ENCODE measurements at regions of chr17 and their contacts with region 1.

Region 1: DNA sequence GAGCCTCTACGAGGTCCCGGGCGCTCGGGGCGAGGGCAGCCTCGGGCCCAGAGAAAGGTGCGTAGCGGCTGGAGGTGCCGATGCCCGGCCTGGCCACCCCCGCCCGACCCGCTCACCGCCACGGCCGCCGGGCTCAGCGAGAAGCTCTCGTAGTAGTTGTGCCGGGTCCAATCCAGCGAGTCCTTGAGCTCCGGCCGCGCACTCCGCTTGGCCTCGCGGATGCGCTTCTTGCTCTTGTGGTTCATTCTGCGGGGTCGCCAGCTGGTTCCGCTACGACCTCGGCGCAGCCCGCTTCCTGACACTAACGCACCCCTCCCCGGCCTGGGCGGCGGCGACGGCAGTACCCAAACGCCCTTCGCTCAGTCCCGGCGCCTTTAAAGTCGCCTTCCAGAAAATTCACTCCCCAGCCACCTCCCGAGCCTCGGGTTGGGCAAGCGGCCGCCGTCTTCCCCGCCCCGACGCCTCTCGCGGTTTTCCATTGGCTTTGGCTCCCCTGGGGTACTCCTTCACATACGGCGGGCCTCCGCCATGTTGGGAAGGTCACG is at the start of gene JMJD6:
- DNase-seq: peak; percentile 98
- H3K4me3 Mint-ChIP-seq: peak within 1 kb of the TSS; percentile 96
- H3K27ac Mint-ChIP-seq: peak within 1 kb of the TSS; percentile 93
- H3K4me1 Mint-ChIP-seq: peaks cover 66% of the 10 kb centered on the region
- H3K27me3 Mint-ChIP-seq: no peaks in the 10 kb centered on the region
- total RNA-seq, gene JMJD6: 33.0 to 33.6 TPM

Region 2: GRCh38 chr17:76557368-76558197 is 168.7 kb before region 1 on chr17:
- CTCF ChIA-PET with region 1: interaction called, 4 read pairs
- intact Hi-C with region 1: loop called (anchors 5 kb)
- DNase-seq: peak; percentile 97
- H3K4me3 Mint-ChIP-seq: peak overlapping the region; percentile 96
- H3K27ac Mint-ChIP-seq: peak overlapping the region; percentile 96
- H3K4me1 Mint-ChIP-seq: peaks cover 54% of the 10 kb centered on the region
- H3K27me3 Mint-ChIP-seq: no peaks in the 10 kb centered on the region

Region 3: DNA sequence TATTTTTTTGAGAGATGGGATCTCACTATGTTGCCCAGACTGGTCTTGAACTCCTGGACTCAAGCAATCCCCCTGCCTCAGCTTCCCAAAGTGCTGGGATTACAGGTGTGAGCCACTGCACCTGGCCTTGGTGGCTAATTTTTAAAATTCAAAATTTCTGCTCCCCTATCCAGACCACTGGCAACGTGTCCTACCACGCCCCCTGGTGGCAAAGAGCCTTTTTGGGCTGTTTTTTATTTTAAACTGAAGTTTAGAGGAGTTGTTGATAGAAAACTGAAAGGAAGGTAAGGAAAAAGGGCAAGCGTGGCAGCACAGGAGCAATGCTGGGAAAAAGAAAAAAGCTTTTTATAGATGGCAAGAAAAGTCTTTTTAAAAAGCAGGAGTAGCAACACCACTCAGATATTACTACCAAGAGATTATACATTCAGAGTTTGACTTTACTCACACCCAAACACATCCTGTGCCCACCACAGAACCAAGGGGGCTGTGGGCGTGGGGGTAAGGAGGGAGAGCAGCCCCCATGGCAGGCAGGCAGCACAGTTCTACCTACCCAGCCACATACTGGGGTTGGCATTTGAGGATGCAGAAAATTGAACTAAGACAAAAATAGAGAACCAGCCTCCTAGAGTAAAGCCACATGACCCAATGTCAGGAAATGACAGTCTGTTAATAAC is 11.3 kb before region 1 on chr17:
- CTCF ChIA-PET with region 1: interaction called, 25 read pairs
- intact Hi-C with region 1: no loop called
- DNase-seq: peak; percentile 90
- H3K4me3 Mint-ChIP-seq: no peak overlapping the region
- H3K27ac Mint-ChIP-seq: peak overlapping the region; percentile 82
- H3K4me1 Mint-ChIP-seq: peaks cover 32% of the 10 kb centered on the region
- H3K27me3 Mint-ChIP-seq: no peaks in the 10 kb centered on the region

Region 4: GRCh38 chr17:76772842-76773525 is 46.7 kb after region 1 on chr17:
- CTCF ChIA-PET with region 1: interaction called, 4 read pairs
- intact Hi-C with region 1: loop called (anchors 2 kb)
- DNase-seq: peak; percentile 79
- H3K4me3 Mint-ChIP-seq: peak overlapping the region; percentile 60
- H3K27ac Mint-ChIP-seq: peak overlapping the region; percentile 92
- H3K4me1 Mint-ChIP-seq: peaks cover 23% of the 10 kb centered on the region
- H3K27me3 Mint-ChIP-seq: no peaks in the 10 kb centered on the region

Region 5: GRCh38 chr17:76843703-76844484 is 117.6 kb after region 1 on chr17:
- CTCF ChIA-PET with region 1: interaction called, 7 read pairs
- intact Hi-C with region 1: loop called (anchors 1 kb)
- DNase-seq: no peak
- H3K4me3 Mint-ChIP-seq: no peak overlapping the region
- H3K27ac Mint-ChIP-seq: no peak overlapping the region
- H3K4me1 Mint-ChIP-seq: peaks cover 11% of the 10 kb centered on the region
- H3K27me3 Mint-ChIP-seq: peaks cover 57% of the 10 kb centered on the region

Region 6: GRCh38 chr17:76943781-76944213 is 217.5 kb after region 1 on chr17:
- CTCF ChIA-PET with region 1: no interaction called
- intact Hi-C with region 1: no loop called
- DNase-seq: no peak
- H3K4me3 Mint-ChIP-seq: no peak overlapping the region
- H3K27ac Mint-ChIP-seq: no peak overlapping the region
- H3K4me1 Mint-ChIP-seq: no peaks in the 10 kb centered on the region
- H3K27me3 Mint-ChIP-seq: no peaks in the 10 kb centered on the region

Region 7: GRCh38 chr17:76997981-76998531 is 271.8 kb after region 1 on chr17:
- CTCF ChIA-PET with region 1: no interaction called
- intact Hi-C with region 1: no loop called
- DNase-seq: peak; percentile 85
- H3K4me3 Mint-ChIP-seq: peak overlapping the region; percentile 45
- H3K27ac Mint-ChIP-seq: peak overlapping the region; percentile 78
- H3K4me1 Mint-ChIP-seq: peaks cover 55% of the 10 kb centered on the region
- H3K27me3 Mint-ChIP-seq: no peaks in the 10 kb centered on the region

Region 8: GRCh38 chr17:77354420-77355241 is 628.3 kb after region 1 on chr17:
- CTCF ChIA-PET with region 1: no interaction called
- intact Hi-C with region 1: no loop called
- DNase-seq: no peak
- H3K4me3 Mint-ChIP-seq: no peak overlapping the region
- H3K27ac Mint-ChIP-seq: no peak overlapping the region
- H3K4me1 Mint-ChIP-seq: peaks cover 46% of the 10 kb centered on the region
- H3K27me3 Mint-ChIP-seq: no peaks in the 10 kb centered on the region